Motor neuron (in vitro differentiated cells): ENCODE measurements at regions of chr4 and their contacts with region 1.

Region 1: DNA sequence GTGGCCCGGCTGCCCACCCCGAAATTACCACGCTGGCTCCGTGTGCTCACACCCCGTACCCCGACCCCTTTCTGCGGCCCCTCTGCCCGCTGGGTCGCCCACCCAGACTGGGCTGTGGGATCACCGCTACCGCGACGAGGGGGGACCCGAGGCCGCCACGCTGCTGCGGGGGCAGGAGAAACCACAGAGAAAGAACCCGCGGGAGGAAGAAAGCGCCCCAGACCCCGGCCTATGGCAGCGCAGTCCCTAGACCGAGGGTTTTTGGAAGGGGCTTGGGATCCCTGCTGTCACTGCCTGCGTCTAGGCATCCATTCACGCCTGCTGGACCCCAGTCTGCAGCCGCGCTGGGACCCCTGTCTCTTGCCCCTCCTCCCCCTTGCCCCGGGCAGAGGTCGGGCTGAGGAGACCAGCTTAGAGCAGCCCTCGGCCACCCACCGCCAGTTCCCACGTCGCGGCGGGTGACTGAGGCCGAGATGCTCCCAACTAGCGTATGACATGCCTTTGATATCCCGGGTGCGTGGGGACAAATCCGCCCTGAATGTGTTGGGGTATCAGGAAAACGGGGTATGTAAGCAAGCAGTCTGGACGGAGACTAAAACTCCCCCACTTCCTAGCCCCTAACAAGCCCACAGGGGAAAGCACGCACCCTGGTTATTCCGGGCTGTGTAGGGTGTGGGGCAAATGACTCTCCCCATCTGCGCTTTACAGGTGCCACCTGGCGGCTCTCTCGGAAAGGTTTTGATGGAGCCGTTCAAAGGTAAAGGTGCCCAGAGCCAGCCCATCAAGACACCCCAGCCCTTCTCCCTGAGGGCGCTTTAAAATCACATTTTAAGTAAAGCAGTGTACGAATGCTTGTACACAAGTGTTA is 862 bp upstream of the INPP4B start:
- ATAC-seq: peak; percentile 9 to 66 (median 56)
- H3K4me3 ChIP-seq: peak overlapping the region; percentile 42 to 65 (median 51)
- H3K27ac ChIP-seq: no peak overlapping the region
- H3K4me1 ChIP-seq: peaks cover 4 to 5% of the 10 kb centered on the region in 2 donors

Region 2: DNA sequence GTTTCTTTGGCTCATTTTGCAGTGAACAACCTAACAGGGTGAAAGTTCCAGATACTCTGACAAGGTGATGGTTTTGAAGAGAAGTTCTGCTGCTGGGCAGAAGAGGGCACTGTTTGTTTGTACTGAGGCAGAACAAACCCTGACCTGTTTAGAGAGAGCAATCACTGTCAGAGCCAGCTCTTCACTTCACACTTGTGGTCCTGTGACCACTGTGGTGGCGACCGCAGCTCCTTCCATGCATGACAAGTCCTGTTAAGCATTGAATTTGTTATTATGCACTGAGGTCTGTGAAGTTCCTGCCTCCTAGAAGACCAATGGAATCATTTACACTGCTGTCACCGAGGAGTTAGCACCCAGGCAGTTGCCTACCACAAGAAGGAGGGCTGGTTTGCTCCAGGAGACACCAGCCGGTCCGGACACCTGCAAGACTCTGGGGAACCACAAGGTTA is 1539.7 kb before region 1 on chr4:
- in situ Hi-C with region 1: loop called in 1 of 9 experiments (anchors 25 kb)
- ATAC-seq: peak; percentile 91 to 99 (median 98)
- H3K4me3 ChIP-seq: no peak overlapping the region
- H3K27ac ChIP-seq: no peak overlapping the region
- H3K4me1 ChIP-seq: no peaks in the 10 kb centered on the region

Region 3: DNA sequence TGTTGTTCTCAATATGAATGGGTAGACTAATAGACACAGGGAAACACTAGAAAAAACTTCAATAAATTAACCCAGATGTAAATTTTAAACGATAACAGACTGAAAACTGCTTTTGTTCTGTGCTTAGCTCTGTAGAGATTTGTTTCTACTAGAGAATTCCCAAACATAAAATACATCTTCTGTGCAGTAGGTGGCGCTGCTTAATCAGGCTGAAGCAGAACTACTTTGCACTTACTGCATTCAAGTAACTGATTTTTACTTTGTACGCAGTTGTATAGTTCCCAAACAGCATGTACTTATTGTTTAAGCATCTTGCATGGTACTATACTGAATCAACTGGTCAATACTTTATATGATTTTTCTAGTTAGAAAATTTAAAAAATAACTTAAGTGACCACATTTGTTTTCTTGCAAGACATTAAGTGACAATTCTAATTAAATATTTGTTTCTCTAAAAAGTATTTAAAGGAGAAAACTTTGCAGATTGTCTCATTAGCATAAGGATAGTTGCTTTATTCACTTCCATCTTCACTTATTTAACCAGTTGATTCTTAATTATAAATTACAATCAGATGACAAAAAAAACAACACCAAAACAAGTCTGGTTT is 720.0 kb before region 1 on chr4:
- in situ Hi-C with region 1: loop called in 1 of 9 experiments (anchors 25 kb)
- ATAC-seq: peak; percentile 39 to 79 (median 53)
- H3K4me3 ChIP-seq: no peak overlapping the region
- H3K27ac ChIP-seq: no peak overlapping the region
- H3K4me1 ChIP-seq: no peaks in the 10 kb centered on the region

Region 4: DNA sequence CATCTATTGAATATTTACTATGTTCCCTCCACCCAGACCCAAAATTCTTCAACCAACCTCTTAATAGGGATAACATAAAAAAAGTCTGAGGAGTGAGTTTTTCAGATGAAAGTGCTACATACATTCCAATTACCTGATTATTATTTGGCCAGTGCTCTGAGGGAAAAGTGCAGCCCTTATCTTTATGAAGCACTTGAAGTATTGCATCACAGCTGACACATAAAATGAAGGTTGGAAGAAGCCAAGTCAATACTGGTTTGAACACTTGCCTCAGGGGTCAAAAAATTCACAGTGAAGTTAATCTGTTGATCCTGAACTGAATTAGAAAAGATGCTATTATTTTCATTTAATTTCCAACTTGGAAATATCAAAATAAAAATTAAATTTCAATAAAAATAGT is 499.7 kb before region 1 on chr4:
- in situ Hi-C with region 1: loop called in 4 of 9 experiments (anchors 25 kb)
- ATAC-seq: no peak
- H3K4me3 ChIP-seq: no peak overlapping the region
- H3K27ac ChIP-seq: no peak overlapping the region
- H3K4me1 ChIP-seq: peaks cover 34 to 47% of the 10 kb centered on the region in 2 donors

Region 5: DNA sequence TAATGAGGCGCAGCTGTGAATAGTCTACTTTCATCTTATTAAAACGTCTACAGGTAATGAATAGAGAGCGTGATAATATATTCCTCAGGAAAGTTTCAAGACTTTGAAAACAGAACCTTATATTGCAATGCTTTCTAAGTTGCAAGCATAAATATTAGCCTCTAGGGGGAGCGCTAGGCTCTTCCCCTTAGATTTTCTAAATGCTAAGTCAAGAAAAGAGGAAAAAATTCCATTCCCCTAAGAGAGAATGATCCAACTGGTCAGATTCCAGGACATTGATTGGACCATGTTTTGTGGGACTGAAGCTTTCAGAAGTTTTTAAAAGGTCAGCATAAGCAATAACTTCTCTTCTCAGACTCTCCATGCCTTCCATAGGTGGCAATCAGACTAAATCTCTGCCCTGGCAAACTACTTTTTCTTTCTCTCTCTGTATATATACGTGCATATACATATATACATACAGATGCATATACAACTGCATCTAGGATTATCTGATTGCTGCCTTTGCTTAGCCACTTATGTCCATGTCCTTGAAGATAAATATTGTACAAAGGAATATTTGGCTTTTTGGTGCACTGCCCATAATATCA is 493.7 kb before region 1 on chr4:
- in situ Hi-C with region 1: loop called in 4 of 9 experiments (anchors 25 kb)
- ATAC-seq: peak; percentile 24 to 74 (median 44)
- H3K4me3 ChIP-seq: no peak overlapping the region
- H3K27ac ChIP-seq: no peak overlapping the region
- H3K4me1 ChIP-seq: peaks cover 30 to 32% of the 10 kb centered on the region in 2 donors